ENCODE measurements at regions of chr9 and their contacts with region 1.

Region 1: GRCh38 chr9:134896005-134896833 is 15.6 kb downstream of the FCN2 start:
- DNase-seq: peak; percentile 52 to 76
- ATAC-seq: peak; percentile 76 to 90 (median 87)
- H3K4me3 ChIP-seq: no peak overlapping the region
- H3K27ac ChIP-seq: peak overlapping the region; percentile 44 to 85 (median 80)
- H3K4me1 ChIP-seq: peaks cover 8 to 45% (median 34%) of the 10 kb centered on the region in 9 donors
- H3K27me3 ChIP-seq: no peaks in the 10 kb centered on the region
- CTCF ChIP-seq: no peak

Region 2: GRCh38 chr9:134794663-134795370 is 101.4 kb before region 1 on chr9:
- intact Hi-C with region 1: no loop called
- DNase-seq: no peak
- ATAC-seq: no peak
- H3K4me3 ChIP-seq: no peak overlapping the region
- H3K27ac ChIP-seq: no peak overlapping the region
- H3K4me1 ChIP-seq: peaks cover 0 to 2% (median 0%) of the 10 kb centered on the region in 9 donors
- H3K27me3 ChIP-seq: no peaks in the 10 kb centered on the region
- CTCF ChIP-seq: no peak

Region 3: GRCh38 chr9:134944351-134944802 is 48.2 kb after region 1 on chr9:
- intact Hi-C with region 1: loop called in 2 of 10 experiments (anchors 2 to 5 kb)
- DNase-seq: no peak
- ATAC-seq: peak in 7 of 8 donors; percentile 48 to 81 (median 68)
- H3K4me3 ChIP-seq: peak overlapping the region in 1 of 10 donors; percentile 6
- H3K27ac ChIP-seq: peak overlapping the region in 6 of 10 donors; percentile 4 to 47 (median 22)
- H3K4me1 ChIP-seq: peaks cover 6 to 34% (median 30%) of the 10 kb centered on the region in 9 donors
- H3K27me3 ChIP-seq: peaks cover 0 to 72% (median 35%) of the 10 kb centered on the region in 7 donors
- CTCF ChIP-seq: no peak

Measured in heart right ventricle (tissue), 16 donors.